ENCODE measurements at regions of chr10 and their contacts with region 1.

Region 1: GRCh38 chr10:104353325-104354048 is at the start of gene CFAP58:
- DNase-seq: peak; percentile 57
- ATAC-seq: peak; percentile 64
- H3K4me3 ChIP-seq: peak within 1 kb of the TSS; percentile 52
- H3K27ac ChIP-seq: no peak within 1 kb of the TSS
- H3K4me1 ChIP-seq: peaks cover 43% of the 10 kb centered on the region
- H3K27me3 ChIP-seq: no peaks in the 10 kb centered on the region
- CTCF ChIP-seq: peak; percentile 72 to 83 (median 77)
- EP300 ChIP-seq: no peak
- POLR2A ChIP-seq: no peak
- RAD21 ChIP-seq: no peak
- polyA plus RNA-seq, gene CFAP58: 0.03 to 0.11 TPM

Region 2: GRCh38 chr10:104274762-104275721 is 78.4 kb before region 1 on chr10:
- CTCF ChIA-PET with region 1: interaction called, 106 read pairs
- POLR2A ChIA-PET with region 1: no interaction called
- RAD21 ChIA-PET with region 1: interaction called, 24 read pairs
- SMC1A ChIA-PET with region 1: interaction called, 38 read pairs
- in situ Hi-C with region 1: no loop called
- intact Hi-C with region 1: no loop called
- DNase-seq: no peak
- ATAC-seq: peak; percentile 97
- H3K4me3 ChIP-seq: no peak overlapping the region
- H3K27ac ChIP-seq: no peak overlapping the region
- H3K4me1 ChIP-seq: no peaks in the 10 kb centered on the region
- H3K27me3 ChIP-seq: peaks cover 2% of the 10 kb centered on the region in 2 experiments; a peak in 3 of 4 replicates
- CTCF ChIP-seq: peak; percentile 69 to 97 (median 86)
- EP300 ChIP-seq: no peak
- POLR2A ChIP-seq: no peak
- RAD21 ChIP-seq: peak; percentile 36; the same call in 1 of the 2 replicates

Region 3: DNA sequence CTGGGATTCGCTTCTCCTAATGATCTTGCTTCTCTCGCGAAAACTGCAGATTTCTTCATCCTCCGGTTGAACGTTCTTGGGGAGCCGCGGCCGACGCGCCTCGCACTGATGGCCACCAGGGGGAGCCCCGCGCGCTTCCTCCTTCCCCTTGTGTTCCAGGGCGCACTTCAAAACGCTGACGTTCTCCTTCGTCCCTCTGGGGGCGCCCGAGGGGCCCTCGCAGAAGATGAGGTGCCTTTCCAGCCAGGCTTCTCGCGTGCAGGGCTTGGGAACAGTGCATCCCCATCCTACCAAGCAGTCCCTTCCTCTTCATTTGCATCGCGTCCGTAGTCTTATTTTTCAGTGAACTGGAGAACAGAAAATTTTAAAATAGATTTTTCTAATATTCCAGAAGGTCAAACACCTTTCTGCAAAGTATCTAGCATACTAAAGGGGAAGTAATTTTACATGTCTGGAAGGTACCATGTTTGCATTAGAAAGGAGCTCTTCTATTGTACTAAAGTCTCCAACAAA is 62.0 kb before region 1 on chr10:
- CTCF ChIA-PET with region 1: interaction called, 333 read pairs
- POLR2A ChIA-PET with region 1: interaction called, 4 read pairs
- RAD21 ChIA-PET with region 1: interaction called, 55 read pairs
- SMC1A ChIA-PET with region 1: interaction called, 90 read pairs
- in situ Hi-C with region 1: loop called (anchors 10 kb)
- intact Hi-C with region 1: loop called (anchors 1 kb)
- DNase-seq: peak; percentile 40
- ATAC-seq: peak; percentile 99
- H3K4me3 ChIP-seq: no peak overlapping the region
- H3K27ac ChIP-seq: no peak overlapping the region
- H3K4me1 ChIP-seq: no peaks in the 10 kb centered on the region
- H3K27me3 ChIP-seq: no peaks in the 10 kb centered on the region; a peak in 1 of 4 replicates
- CTCF ChIP-seq: peak; percentile 100; a peak in 5 of 6 replicates
- EP300 ChIP-seq: no peak
- POLR2A ChIP-seq: no peak
- RAD21 ChIP-seq: peak; percentile 81

Region 4: DNA sequence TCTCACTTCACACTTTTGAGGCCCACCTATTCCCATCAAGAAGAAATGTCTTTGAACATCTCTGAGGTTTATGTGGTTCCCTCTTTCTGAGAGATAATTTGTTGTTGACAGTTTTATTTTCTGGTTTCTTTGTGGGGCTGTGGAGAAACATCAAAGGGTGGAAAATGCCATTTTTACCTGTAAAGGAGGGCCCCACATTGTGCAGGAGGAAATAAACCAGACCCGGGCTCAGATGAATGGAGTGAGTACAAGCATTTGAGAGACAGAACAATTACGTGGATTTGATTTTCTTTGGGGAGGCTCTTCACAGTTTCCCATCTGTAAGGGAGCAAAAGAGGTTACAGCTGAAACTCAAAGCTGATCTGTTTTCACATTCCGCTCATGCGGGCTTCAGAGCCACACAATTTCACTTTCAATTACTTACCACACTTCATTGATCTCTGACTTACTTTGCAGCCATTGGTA is 45.0 kb before region 1 on chr10:
- CTCF ChIA-PET with region 1: interaction called, 419 read pairs
- POLR2A ChIA-PET with region 1: interaction called, 10 read pairs
- RAD21 ChIA-PET with region 1: interaction called, 137 read pairs
- SMC1A ChIA-PET with region 1: interaction called, 187 read pairs
- in situ Hi-C with region 1: loop called (anchors 5 kb)
- intact Hi-C with region 1: loop called (anchors 1 kb)
- DNase-seq: peak; percentile 56
- ATAC-seq: peak; percentile 83
- H3K4me3 ChIP-seq: peak overlapping the region; percentile 36; the same call in 1 of the 2 replicates
- H3K27ac ChIP-seq: peak overlapping the region; percentile 13; the same call in 1 of the 2 replicates
- H3K4me1 ChIP-seq: peaks cover 26% of the 10 kb centered on the region
- H3K27me3 ChIP-seq: no peaks in the 10 kb centered on the region
- CTCF ChIP-seq: no peak
- EP300 ChIP-seq: no peak
- POLR2A ChIP-seq: no peak
- RAD21 ChIP-seq: no peak

Region 5: DNA sequence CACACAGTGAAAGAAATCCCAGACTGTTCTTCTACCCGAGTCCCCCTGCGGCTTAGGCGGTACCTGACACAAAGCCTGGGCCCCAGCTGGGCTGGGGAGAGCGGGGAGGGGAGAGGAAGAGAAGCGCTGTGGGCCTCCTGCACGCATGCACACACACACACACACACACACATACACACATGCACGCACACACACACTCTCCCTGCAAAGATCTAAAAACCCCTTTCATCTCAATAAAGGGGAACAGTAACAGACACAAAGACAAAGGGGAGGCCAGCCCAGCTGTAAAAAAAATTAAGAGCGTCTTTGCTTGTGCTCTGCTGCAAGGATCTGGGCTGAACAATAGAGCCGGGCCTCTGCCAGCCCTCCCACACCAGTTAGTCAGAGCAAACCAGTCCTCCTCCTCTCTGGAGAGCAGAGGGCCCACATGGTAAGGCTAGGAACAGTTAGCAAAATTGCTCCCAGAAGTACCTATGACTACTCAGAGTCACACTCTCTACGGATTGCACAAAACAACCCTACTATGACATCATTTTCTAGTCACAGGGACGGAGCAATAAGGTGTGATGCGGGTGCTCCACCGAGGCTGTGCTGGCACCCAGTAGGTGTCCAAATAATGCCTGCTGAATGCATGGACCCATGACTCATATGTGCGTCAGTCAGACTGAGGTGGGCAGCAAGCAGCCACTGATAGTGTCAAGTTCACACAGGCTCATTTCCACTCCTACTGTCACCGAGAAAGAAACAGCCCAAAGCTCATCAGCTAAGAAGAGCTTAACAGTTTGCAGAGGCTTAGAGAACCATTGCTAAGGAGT is 24.4 kb before region 1 on chr10:
- CTCF ChIA-PET with region 1: interaction called, 111 read pairs
- POLR2A ChIA-PET with region 1: interaction called, 3 read pairs
- RAD21 ChIA-PET with region 1: interaction called, 4 read pairs
- SMC1A ChIA-PET with region 1: interaction called, 24 read pairs
- in situ Hi-C with region 1: no loop called
- intact Hi-C with region 1: no loop called
- DNase-seq: no peak
- ATAC-seq: peak; percentile 77
- H3K4me3 ChIP-seq: peak overlapping the region; percentile 59
- H3K27ac ChIP-seq: 0 out of 2 replicates have a peak overlapping the region, but pooled peaks have one; percentile 2
- H3K4me1 ChIP-seq: peaks cover 26% of the 10 kb centered on the region
- H3K27me3 ChIP-seq: no peaks in the 10 kb centered on the region
- CTCF ChIP-seq: no peak
- EP300 ChIP-seq: 0 out of 4 replicates have a peak, but pooled peaks of 1 of the 2 experiments have one; percentile 32
- POLR2A ChIP-seq: no peak
- RAD21 ChIP-seq: no peak